Esophagus squamous epithelium (tissue), 5 donors: ENCODE measurements at regions of chr19 and their contacts with region 1.

Region 1: GRCh38 chr19:54586397-54586796 is 7.0 kb upstream of the LILRA1 start:
- DNase-seq: no peak
- H3K4me3 ChIP-seq: no peak overlapping the region
- H3K27ac ChIP-seq: no peak overlapping the region
- H3K4me1 ChIP-seq: no peaks in the 10 kb centered on the region
- H3K27me3 ChIP-seq: peaks cover 0 to 4% (median 0%) of the 10 kb centered on the region in 4 donors
- CTCF ChIP-seq: no peak
- POLR2A ChIP-seq: no peak

Region 2: GRCh38 chr19:54281007-54281728 is 305.2 kb before region 1 on chr19 and contains the start of gene LILRB2:
- intact Hi-C with region 1: loop called (anchors 5 kb)
- DNase-seq: no peak
- H3K4me3 ChIP-seq: peak within 1 kb of the TSS in 2 of 4 donors; percentile 18 to 23
- H3K27ac ChIP-seq: peak within 1 kb of the TSS in 2 of 4 donors; percentile 46 to 52
- H3K4me1 ChIP-seq: no peaks in the 10 kb centered on the region
- H3K27me3 ChIP-seq: peaks cover 0 to 54% (median 0%) of the 10 kb centered on the region in 4 donors
- CTCF ChIP-seq: no peak
- POLR2A ChIP-seq: no peak
- total RNA-seq, gene LILRB2: 0.40 to 1.9 (median 1.0) TPM in 3 of 4 donors, not detected in the other

Region 3: GRCh38 chr19:54662730-54663129 is 76.3 kb after region 1 on chr19 and contains the start of gene LILRB4:
- intact Hi-C with region 1: no loop called
- DNase-seq: no peak
- H3K4me3 ChIP-seq: peak within 1 kb of the TSS in 1 of 4 donors; percentile 12
- H3K27ac ChIP-seq: peak within 1 kb of the TSS in 1 of 4 donors; percentile 44
- H3K4me1 ChIP-seq: no peaks in the 10 kb centered on the region
- H3K27me3 ChIP-seq: peaks cover 0 to 27% (median 0%) of the 10 kb centered on the region in 4 donors
- CTCF ChIP-seq: no peak
- POLR2A ChIP-seq: peak in 1 of 4 donors; percentile 9
- total RNA-seq, gene LILRB4: 0.31 to 6.7 (median 2.5) TPM